ENCODE measurements at regions of chr2 and their contacts with region 1.

Region 1: GRCh38 chr2:126776692-126777619 is 121.0 kb downstream of the GYPC start:
- DNase-seq: peak; percentile 62 to 85 (median 80)
- ATAC-seq: peak; percentile 91
- H3K4me3 ChIP-seq: peak overlapping the region; percentile 86
- H3K4me3 Mint-ChIP-seq: peak overlapping the region; percentile 90 to 98 (median 94)
- H3K27ac ChIP-seq: peak overlapping the region; percentile 64
- H3K27ac Mint-ChIP-seq: peak overlapping the region; percentile 46 to 95 (median 87)
- H3K4me1 ChIP-seq: no peaks in the 10 kb centered on the region
- H3K4me1 Mint-ChIP-seq: peaks cover 15 to 27% (median 18%) of the 10 kb centered on the region in 7 donors
- H3K27me3 ChIP-seq: no peaks in the 10 kb centered on the region
- H3K27me3 Mint-ChIP-seq: peaks cover under 1 to 23% (median 3%) of the 10 kb centered on the region in 5 donors

Region 2: DNA sequence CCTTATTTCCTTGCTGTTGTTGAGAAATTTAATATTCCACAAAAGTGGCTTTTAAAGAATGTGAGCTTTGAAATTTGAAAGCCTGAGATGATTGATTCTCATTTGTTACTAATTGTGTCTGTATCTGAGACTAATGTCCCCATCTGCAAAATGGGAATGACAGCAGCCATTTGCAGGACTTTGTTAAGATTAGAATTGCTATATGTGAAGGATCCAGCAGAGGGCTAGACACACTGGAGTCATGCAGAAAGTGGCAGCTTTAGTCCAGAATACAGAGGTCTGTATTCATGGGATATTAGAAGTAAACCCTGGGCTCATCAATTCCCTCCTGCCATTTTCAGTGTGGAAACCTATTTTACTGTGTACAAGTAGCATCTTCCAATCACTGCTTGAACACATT is 417.5 kb before region 1 on chr2:
- CTCF ChIA-PET with region 1: interaction called, 5 read pairs
- POLR2A ChIA-PET with region 1: no interaction called
- intact Hi-C with region 1: loop called in 1 of 2 experiments (anchors 1 kb)
- DNase-seq: peak in 2 of 9 donors; percentile 14
- ATAC-seq: peak; percentile 45
- H3K4me3 ChIP-seq: no peak overlapping the region
- H3K4me3 Mint-ChIP-seq: no peak overlapping the region
- H3K27ac ChIP-seq: no peak overlapping the region
- H3K27ac Mint-ChIP-seq: no peak overlapping the region
- H3K4me1 ChIP-seq: no peaks in the 10 kb centered on the region
- H3K4me1 Mint-ChIP-seq: no peaks in the 10 kb centered on the region
- H3K27me3 ChIP-seq: no peaks in the 10 kb centered on the region
- H3K27me3 Mint-ChIP-seq: peaks cover 0 to 26% (median 9%) of the 10 kb centered on the region in 5 donors

Region 3: GRCh38 chr2:126527836-126528507 is 249.0 kb before region 1 on chr2:
- CTCF ChIA-PET with region 1: interaction called, 82 read pairs
- POLR2A ChIA-PET with region 1: interaction called, 7 read pairs
- intact Hi-C with region 1: loop called (anchors 1 kb)
- DNase-seq: peak; percentile 43 to 74 (median 64)
- ATAC-seq: peak; percentile 79
- H3K4me3 ChIP-seq: no peak overlapping the region
- H3K4me3 Mint-ChIP-seq: no peak overlapping the region
- H3K27ac ChIP-seq: no peak overlapping the region
- H3K27ac Mint-ChIP-seq: no peak overlapping the region
- H3K4me1 ChIP-seq: no peaks in the 10 kb centered on the region
- H3K4me1 Mint-ChIP-seq: no peaks in the 10 kb centered on the region
- H3K27me3 ChIP-seq: no peaks in the 10 kb centered on the region
- H3K27me3 Mint-ChIP-seq: peaks cover 0 to 3% (median 0%) of the 10 kb centered on the region in 5 donors

Region 4: DNA sequence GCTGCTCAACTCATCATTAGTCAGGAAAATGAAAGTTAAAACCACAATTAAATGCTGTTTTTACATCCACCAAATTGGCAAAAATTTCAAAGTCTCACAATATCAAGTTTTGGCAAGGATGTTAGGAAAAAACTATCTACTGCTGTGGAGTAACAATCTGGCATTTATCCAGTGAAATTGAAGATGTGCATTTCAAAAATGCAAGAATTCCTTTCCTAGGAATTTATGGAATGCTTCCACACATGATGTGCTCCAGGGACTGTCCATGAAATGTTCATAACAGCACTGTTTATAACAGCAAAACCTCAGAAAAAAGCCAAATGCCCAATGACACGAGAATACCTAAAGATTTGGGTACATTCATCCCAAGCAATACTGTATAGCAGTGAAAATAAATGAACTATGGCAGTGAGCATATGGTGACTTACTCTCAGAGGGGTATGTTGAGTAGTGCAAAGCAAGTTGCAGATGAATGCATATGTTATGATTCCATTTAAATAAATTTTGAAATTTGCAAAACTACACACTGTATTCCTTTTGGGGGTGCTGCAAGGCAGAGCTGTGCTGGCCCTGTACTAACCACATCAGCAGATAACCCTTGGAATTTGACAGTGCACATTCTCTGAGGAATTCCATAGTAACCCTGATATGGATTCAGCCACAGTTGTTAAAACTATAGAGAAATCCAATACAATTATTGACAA is 162.3 kb before region 1 on chr2:
- CTCF ChIA-PET with region 1: interaction called, 3 read pairs
- POLR2A ChIA-PET with region 1: no interaction called
- intact Hi-C with region 1: loop called in 1 of 2 experiments (anchors 1 kb)
- DNase-seq: no peak
- ATAC-seq: no peak
- H3K4me3 ChIP-seq: no peak overlapping the region
- H3K4me3 Mint-ChIP-seq: no peak overlapping the region
- H3K27ac ChIP-seq: no peak overlapping the region
- H3K27ac Mint-ChIP-seq: no peak overlapping the region
- H3K4me1 ChIP-seq: no peaks in the 10 kb centered on the region
- H3K4me1 Mint-ChIP-seq: no peaks in the 10 kb centered on the region
- H3K27me3 ChIP-seq: no peaks in the 10 kb centered on the region
- H3K27me3 Mint-ChIP-seq: peaks cover 0 to 4% (median 0%) of the 10 kb centered on the region in 5 donors

Region 5: GRCh38 chr2:126657636-126658318 is 119.2 kb before region 1 on chr2:
- CTCF ChIA-PET with region 1: interaction called, 6 read pairs
- POLR2A ChIA-PET with region 1: interaction called, 6 read pairs
- intact Hi-C with region 1: loop called (anchors 1 kb)
- DNase-seq: peak; percentile 40 to 79 (median 73)
- ATAC-seq: peak; percentile 72
- H3K4me3 ChIP-seq: peak overlapping the region; percentile 99
- H3K4me3 Mint-ChIP-seq: peak overlapping the region; percentile 88 to 100 (median 96)
- H3K27ac ChIP-seq: peak overlapping the region; percentile 98
- H3K27ac Mint-ChIP-seq: peak overlapping the region; percentile 93 to 100 (median 98)
- H3K4me1 ChIP-seq: peaks cover 41 to 59% of the 10 kb centered on the region in 2 donors
- H3K4me1 Mint-ChIP-seq: peaks cover 50 to 78% (median 63%) of the 10 kb centered on the region in 7 donors
- H3K27me3 ChIP-seq: no peaks in the 10 kb centered on the region
- H3K27me3 Mint-ChIP-seq: no peaks in the 10 kb centered on the region

Region 6: GRCh38 chr2:126749537-126749936 is 27.4 kb before region 1 on chr2:
- CTCF ChIA-PET with region 1: interaction called, 4 read pairs
- POLR2A ChIA-PET with region 1: no interaction called
- intact Hi-C with region 1: loop called in 1 of 2 experiments (anchors 1 kb)
- DNase-seq: peak in 2 of 9 donors; percentile 14 to 15
- ATAC-seq: no peak
- H3K4me3 ChIP-seq: no peak overlapping the region
- H3K4me3 Mint-ChIP-seq: no peak overlapping the region
- H3K27ac ChIP-seq: no peak overlapping the region
- H3K27ac Mint-ChIP-seq: peak overlapping the region in 2 of 9 donors; percentile 5 to 11
- H3K4me1 ChIP-seq: no peaks in the 10 kb centered on the region
- H3K4me1 Mint-ChIP-seq: peaks cover 2 to 18% (median 6%) of the 10 kb centered on the region in 7 donors
- H3K27me3 ChIP-seq: no peaks in the 10 kb centered on the region
- H3K27me3 Mint-ChIP-seq: peaks cover 0 to 8% (median 0%) of the 10 kb centered on the region in 5 donors

Region 7: DNA sequence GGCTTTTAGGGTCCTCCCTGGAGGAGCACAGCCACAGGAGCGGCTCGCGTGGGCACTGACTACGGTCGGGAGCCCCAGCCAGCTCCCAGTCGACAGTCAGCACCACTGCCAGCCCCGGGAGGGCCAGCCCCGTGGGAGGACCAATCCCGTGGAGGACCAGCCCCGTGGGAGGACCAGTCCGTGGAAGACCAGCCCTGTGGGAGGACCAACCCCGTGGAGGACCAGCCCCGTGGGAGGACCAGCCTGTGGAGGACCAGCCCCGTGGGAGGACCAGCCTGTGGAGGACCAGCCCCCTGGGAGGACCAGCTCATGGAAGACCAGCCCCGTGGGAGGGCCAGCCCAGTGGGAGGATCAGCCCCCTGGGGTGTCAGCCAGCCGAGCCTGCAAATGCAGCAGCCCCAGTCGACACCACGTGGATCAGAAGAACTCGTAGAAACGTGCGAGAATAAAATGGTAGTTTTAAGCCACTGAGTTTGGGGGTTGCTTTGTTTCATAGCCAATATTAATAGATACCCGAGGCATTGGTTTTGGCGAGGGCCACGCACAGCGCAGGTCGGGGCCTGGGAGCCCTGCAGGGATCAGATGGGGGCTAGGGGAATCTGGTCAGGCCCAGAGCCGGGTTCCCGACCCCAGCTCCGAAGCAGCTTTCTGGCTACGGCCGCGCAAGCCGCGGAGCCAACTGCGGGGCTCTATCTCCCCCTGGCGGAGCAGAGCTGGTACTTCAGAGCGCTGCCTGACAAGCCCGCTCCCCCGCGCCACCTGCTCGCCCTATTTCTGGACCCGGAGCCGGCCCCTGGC is 194.7 kb after region 1 on chr2:
- CTCF ChIA-PET with region 1: interaction called, 3 read pairs
- POLR2A ChIA-PET with region 1: no interaction called
- intact Hi-C with region 1: loop called in 1 of 2 experiments (anchors 2 kb)
- DNase-seq: peak; percentile 45 to 75 (median 68)
- ATAC-seq: peak; percentile 87
- H3K4me3 ChIP-seq: peak overlapping the region; percentile 63
- H3K4me3 Mint-ChIP-seq: peak overlapping the region; percentile 57 to 84 (median 80)
- H3K27ac ChIP-seq: no peak overlapping the region
- H3K27ac Mint-ChIP-seq: peak overlapping the region in 3 of 9 donors; percentile 7 to 62 (median 27)
- H3K4me1 ChIP-seq: no peaks in the 10 kb centered on the region
- H3K4me1 Mint-ChIP-seq: peaks cover 0 to 5% (median 4%) of the 10 kb centered on the region in 7 donors
- H3K27me3 ChIP-seq: peaks cover 0 to 3% of the 10 kb centered on the region in 2 donors
- H3K27me3 Mint-ChIP-seq: peaks cover 28 to 50% (median 38%) of the 10 kb centered on the region in 5 donors